Caco-2 (cell line): ENCODE measurements at regions of chr14 and their contacts with region 1.

Region 1: DNA sequence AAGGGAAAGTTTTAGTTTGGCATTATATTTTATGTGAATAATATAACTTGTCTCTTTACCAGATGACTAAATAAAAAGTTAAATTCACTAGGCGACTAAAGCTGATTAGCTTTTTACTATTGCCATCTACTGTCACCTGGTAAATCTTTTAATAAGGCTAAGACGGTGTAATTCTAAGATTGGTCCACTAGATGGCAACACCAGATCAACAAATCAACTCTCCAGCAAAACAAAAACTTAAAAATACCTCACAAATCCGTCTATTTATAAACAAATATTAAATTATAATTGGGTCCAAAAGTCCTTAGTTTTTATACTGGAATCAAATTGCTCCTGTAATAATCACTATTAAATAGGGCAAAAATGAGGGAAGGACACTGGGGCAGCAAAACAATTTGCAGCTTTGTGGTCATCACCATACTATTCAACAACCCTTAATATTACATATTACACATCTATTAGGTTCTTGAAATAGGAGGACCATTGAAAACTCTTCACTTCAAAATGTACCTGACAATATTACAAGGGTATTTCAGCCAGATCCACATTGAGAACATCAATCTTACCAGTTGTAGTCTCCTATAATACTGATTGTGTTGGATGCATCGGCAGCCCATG is 47.9 kb downstream of the GALC start:
- DNase-seq: peak in 1 of 2 experiments; percentile 15
- H3K4me3 ChIP-seq: no peak overlapping the region
- H3K4me3 Mint-ChIP-seq: no peak overlapping the region
- H3K27ac Mint-ChIP-seq: no peak overlapping the region
- H3K4me1 ChIP-seq: no peaks in the 10 kb centered on the region
- H3K4me1 Mint-ChIP-seq: no peaks in the 10 kb centered on the region
- H3K27me3 ChIP-seq: no peaks in the 10 kb centered on the region
- H3K27me3 Mint-ChIP-seq: no peaks in the 10 kb centered on the region
- CTCF ChIP-seq: peak; percentile 43 to 58

Region 2: DNA sequence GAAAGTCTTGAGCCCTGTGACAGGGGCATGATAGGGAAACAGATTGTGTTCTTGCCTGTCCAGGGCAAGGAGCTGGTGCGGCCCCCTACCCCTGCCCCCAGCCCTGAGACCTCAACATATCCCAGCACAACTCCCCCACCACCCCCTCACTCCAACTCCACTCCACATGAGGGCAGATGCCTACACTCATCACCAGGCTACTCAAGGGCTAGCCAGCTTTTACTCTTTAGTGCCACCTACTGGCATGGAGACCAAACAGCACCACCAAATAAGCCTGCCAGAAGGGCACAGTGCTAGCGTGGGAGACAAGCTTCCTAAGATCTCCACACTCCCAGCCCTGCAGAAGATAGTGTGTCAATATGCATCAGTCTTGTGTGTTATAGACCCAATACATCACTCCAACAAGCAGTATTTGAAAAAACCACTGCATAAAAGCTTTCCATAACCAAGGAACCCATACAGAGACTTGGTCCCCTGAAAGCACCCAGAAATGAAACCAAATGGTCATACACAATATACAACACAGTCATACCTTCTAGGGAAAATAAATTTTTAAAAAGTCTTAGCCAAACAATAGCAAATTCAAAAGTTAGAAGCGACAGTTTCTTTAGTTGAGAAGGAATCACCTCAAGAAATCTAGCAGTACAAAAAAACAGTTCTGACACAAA is 223.5 kb after region 1 on chr14:
- CTCF ChIA-PET with region 1: no interaction called
- POLR2A ChIA-PET with region 1: no interaction called
- intact Hi-C with region 1: loop called (anchors 1 kb)
- DNase-seq: peak in 1 of 2 experiments; percentile 56
- H3K4me3 ChIP-seq: no peak overlapping the region
- H3K4me3 Mint-ChIP-seq: no peak overlapping the region
- H3K27ac Mint-ChIP-seq: no peak overlapping the region
- H3K4me1 ChIP-seq: no peaks in the 10 kb centered on the region
- H3K4me1 Mint-ChIP-seq: no peaks in the 10 kb centered on the region
- H3K27me3 ChIP-seq: no peaks in the 10 kb centered on the region
- H3K27me3 Mint-ChIP-seq: peaks cover 3% of the 10 kb centered on the region
- CTCF ChIP-seq: peak; percentile 44 to 49

Region 3: DNA sequence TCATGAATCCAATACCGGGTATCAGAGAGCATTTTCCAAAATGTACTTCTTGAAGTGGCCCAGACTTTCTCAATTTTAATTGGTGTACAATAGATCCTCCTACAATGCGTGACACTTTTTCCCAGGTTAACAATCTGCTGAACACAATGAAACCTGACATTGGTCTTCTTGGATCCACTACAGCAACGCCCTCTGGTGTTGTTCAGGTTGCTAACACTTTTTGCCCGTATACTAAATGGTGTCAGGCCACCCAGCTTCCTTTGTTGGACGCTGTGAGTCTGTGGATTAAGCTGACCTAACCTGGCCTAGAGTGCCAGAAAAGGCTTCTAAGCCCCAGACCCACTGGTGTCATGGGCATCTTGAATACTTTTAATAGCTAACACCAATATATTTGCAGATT is 288.8 kb after region 1 on chr14:
- CTCF ChIA-PET with region 1: no interaction called
- POLR2A ChIA-PET with region 1: no interaction called
- intact Hi-C with region 1: loop called (anchors 2 kb)
- DNase-seq: peak; percentile 36 to 39
- H3K4me3 ChIP-seq: no peak overlapping the region
- H3K4me3 Mint-ChIP-seq: no peak overlapping the region
- H3K27ac Mint-ChIP-seq: no peak overlapping the region
- H3K4me1 ChIP-seq: no peaks in the 10 kb centered on the region
- H3K4me1 Mint-ChIP-seq: no peaks in the 10 kb centered on the region
- H3K27me3 ChIP-seq: no peaks in the 10 kb centered on the region
- H3K27me3 Mint-ChIP-seq: no peaks in the 10 kb centered on the region
- CTCF ChIP-seq: peak; percentile 25 to 33

Region 4: GRCh38 chr14:88380405-88380804 is 435.3 kb after region 1 on chr14:
- CTCF ChIA-PET with region 1: interaction called, 4 read pairs
- POLR2A ChIA-PET with region 1: no interaction called
- intact Hi-C with region 1: loop called (anchors 1 kb)
- DNase-seq: peak in 1 of 2 experiments; percentile 29
- H3K4me3 ChIP-seq: no peak overlapping the region
- H3K4me3 Mint-ChIP-seq: no peak overlapping the region
- H3K27ac Mint-ChIP-seq: no peak overlapping the region
- H3K4me1 ChIP-seq: no peaks in the 10 kb centered on the region
- H3K4me1 Mint-ChIP-seq: no peaks in the 10 kb centered on the region
- H3K27me3 ChIP-seq: no peaks in the 10 kb centered on the region
- H3K27me3 Mint-ChIP-seq: peaks cover 3% of the 10 kb centered on the region
- CTCF ChIP-seq: peak; percentile 38 to 47

Region 5: GRCh38 chr14:88562831-88563686 is 618.0 kb after region 1 on chr14 and contains the start of gene ZC3H14:
- CTCF ChIA-PET with region 1: interaction called, 3 read pairs
- POLR2A ChIA-PET with region 1: no interaction called
- intact Hi-C with region 1: loop called (anchors 5 kb)
- DNase-seq: peak; percentile 87 to 93
- H3K4me3 ChIP-seq: peak within 1 kb of the TSS; percentile 99
- H3K4me3 Mint-ChIP-seq: peak within 1 kb of the TSS; percentile 73
- H3K27ac Mint-ChIP-seq: peak within 1 kb of the TSS; percentile 44
- H3K4me1 ChIP-seq: peaks cover 18% of the 10 kb centered on the region; the same call in 1 of the 2 replicates
- H3K4me1 Mint-ChIP-seq: peaks cover 7% of the 10 kb centered on the region
- H3K27me3 ChIP-seq: no peaks in the 10 kb centered on the region
- H3K27me3 Mint-ChIP-seq: no peaks in the 10 kb centered on the region
- CTCF ChIP-seq: no peak
- total RNA-seq, gene ZC3H14: 77.1 and 77.6 TPM in 2 replicates

Region 6: GRCh38 chr14:88667555-88668273 is 722.6 kb after region 1 on chr14:
- CTCF ChIA-PET with region 1: no interaction called
- POLR2A ChIA-PET with region 1: no interaction called
- intact Hi-C with region 1: no loop called
- DNase-seq: peak; percentile 59 to 72
- H3K4me3 ChIP-seq: no peak overlapping the region
- H3K4me3 Mint-ChIP-seq: no peak overlapping the region
- H3K27ac Mint-ChIP-seq: no peak overlapping the region
- H3K4me1 ChIP-seq: no peaks in the 10 kb centered on the region
- H3K4me1 Mint-ChIP-seq: no peaks in the 10 kb centered on the region
- H3K27me3 ChIP-seq: no peaks in the 10 kb centered on the region
- H3K27me3 Mint-ChIP-seq: peaks cover 17% of the 10 kb centered on the region
- CTCF ChIP-seq: peak; percentile 81 to 89